ENCODE measurements at regions of chr9 and their contacts with region 1.

Region 1: GRCh38 chr9:20997503-20998076 is 33.9 kb downstream of the HACD4 start:
- DNase-seq: no peak
- ATAC-seq: no peak
- H3K4me3 ChIP-seq: no peak overlapping the region
- H3K4me3 Mint-ChIP-seq: peak overlapping the region in 5 of 10 donors; percentile 21 to 52 (median 37)
- H3K27ac ChIP-seq: no peak overlapping the region
- H3K27ac Mint-ChIP-seq: peak overlapping the region in 8 of 9 donors; percentile 21 to 92 (median 72)
- H3K4me1 ChIP-seq: peaks cover 27 to 33% of the 10 kb centered on the region in 2 donors
- H3K4me1 Mint-ChIP-seq: peaks cover 13 to 61% (median 48%) of the 10 kb centered on the region in 7 donors
- H3K27me3 ChIP-seq: no peaks in the 10 kb centered on the region
- H3K27me3 Mint-ChIP-seq: no peaks in the 10 kb centered on the region

Region 2: DNA sequence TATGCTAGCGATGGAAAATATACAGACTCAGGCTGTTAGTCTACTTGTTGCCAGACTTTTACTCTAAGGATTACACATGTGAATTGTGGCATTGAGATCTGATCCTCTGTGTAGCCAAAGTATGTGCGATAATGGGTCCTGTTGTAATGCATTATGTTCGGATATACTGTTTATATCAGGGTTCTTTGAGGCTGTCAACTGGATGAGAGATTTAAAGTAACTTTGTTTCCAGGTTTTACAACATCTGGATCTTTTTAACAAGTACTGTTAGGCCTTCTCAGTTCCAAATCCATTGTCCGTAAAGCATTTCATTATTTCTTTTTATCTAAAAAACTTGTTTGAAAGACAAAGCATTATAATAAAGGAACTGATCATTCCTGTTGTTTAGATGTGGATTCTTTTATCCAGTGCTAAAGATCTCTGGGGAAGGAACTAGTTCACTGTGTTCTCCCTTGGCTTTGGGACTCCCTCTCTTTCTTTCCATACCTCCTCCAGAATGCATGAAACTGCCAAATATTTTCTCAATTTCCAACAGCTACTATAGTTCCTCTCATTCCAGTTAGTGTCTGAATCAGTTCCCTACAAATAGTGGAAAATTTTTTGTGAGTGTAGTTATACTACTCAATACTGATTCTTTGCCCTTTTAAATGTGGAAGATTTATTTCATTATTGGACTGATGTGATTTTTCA is 34.9 kb before region 1 on chr9:
- CTCF ChIA-PET with region 1: no interaction called
- POLR2A ChIA-PET with region 1: interaction called, 3 read pairs
- intact Hi-C with region 1: loop called in 1 of 2 experiments (anchors 5 kb)
- DNase-seq: no peak
- ATAC-seq: no peak
- H3K4me3 ChIP-seq: no peak overlapping the region
- H3K4me3 Mint-ChIP-seq: no peak overlapping the region
- H3K27ac ChIP-seq: no peak overlapping the region
- H3K27ac Mint-ChIP-seq: no peak overlapping the region
- H3K4me1 ChIP-seq: no peaks in the 10 kb centered on the region
- H3K4me1 Mint-ChIP-seq: peaks cover 0 to 3% (median 0%) of the 10 kb centered on the region in 7 donors
- H3K27me3 ChIP-seq: no peaks in the 10 kb centered on the region
- H3K27me3 Mint-ChIP-seq: no peaks in the 10 kb centered on the region

Region 3: GRCh38 chr9:20980832-20981455 is 16.6 kb before region 1 on chr9:
- CTCF ChIA-PET with region 1: interaction called, 3 read pairs
- POLR2A ChIA-PET with region 1: no interaction called
- intact Hi-C with region 1: loop called in 1 of 2 experiments (anchors 2 kb)
- DNase-seq: no peak
- ATAC-seq: peak; percentile 70
- H3K4me3 ChIP-seq: no peak overlapping the region
- H3K4me3 Mint-ChIP-seq: no peak overlapping the region
- H3K27ac ChIP-seq: no peak overlapping the region
- H3K27ac Mint-ChIP-seq: peak overlapping the region in 1 of 9 donors; percentile 0
- H3K4me1 ChIP-seq: no peaks in the 10 kb centered on the region
- H3K4me1 Mint-ChIP-seq: peaks cover 0 to 11% (median 4%) of the 10 kb centered on the region in 7 donors
- H3K27me3 ChIP-seq: no peaks in the 10 kb centered on the region
- H3K27me3 Mint-ChIP-seq: no peaks in the 10 kb centered on the region

Region 4: GRCh38 chr9:21016701-21017491 is 19.3 kb after region 1 on chr9:
- CTCF ChIA-PET with region 1: no interaction called
- POLR2A ChIA-PET with region 1: interaction called, 3 read pairs
- intact Hi-C with region 1: loop called in 1 of 2 experiments (anchors 2 kb)
- DNase-seq: no peak
- ATAC-seq: no peak
- H3K4me3 ChIP-seq: no peak overlapping the region
- H3K4me3 Mint-ChIP-seq: no peak overlapping the region
- H3K27ac ChIP-seq: no peak overlapping the region
- H3K27ac Mint-ChIP-seq: peak overlapping the region in 3 of 9 donors; percentile 13 to 32 (median 17)
- H3K4me1 ChIP-seq: peaks cover 0 to 3% of the 10 kb centered on the region in 2 donors
- H3K4me1 Mint-ChIP-seq: peaks cover 0 to 33% (median 19%) of the 10 kb centered on the region in 7 donors
- H3K27me3 ChIP-seq: no peaks in the 10 kb centered on the region
- H3K27me3 Mint-ChIP-seq: no peaks in the 10 kb centered on the region

Measured in naive thymus-derived CD4-positive, alpha-beta T cell (primary cell).